ENCODE measurements at regions of chr5 and their contacts with region 1.

Region 1: DNA sequence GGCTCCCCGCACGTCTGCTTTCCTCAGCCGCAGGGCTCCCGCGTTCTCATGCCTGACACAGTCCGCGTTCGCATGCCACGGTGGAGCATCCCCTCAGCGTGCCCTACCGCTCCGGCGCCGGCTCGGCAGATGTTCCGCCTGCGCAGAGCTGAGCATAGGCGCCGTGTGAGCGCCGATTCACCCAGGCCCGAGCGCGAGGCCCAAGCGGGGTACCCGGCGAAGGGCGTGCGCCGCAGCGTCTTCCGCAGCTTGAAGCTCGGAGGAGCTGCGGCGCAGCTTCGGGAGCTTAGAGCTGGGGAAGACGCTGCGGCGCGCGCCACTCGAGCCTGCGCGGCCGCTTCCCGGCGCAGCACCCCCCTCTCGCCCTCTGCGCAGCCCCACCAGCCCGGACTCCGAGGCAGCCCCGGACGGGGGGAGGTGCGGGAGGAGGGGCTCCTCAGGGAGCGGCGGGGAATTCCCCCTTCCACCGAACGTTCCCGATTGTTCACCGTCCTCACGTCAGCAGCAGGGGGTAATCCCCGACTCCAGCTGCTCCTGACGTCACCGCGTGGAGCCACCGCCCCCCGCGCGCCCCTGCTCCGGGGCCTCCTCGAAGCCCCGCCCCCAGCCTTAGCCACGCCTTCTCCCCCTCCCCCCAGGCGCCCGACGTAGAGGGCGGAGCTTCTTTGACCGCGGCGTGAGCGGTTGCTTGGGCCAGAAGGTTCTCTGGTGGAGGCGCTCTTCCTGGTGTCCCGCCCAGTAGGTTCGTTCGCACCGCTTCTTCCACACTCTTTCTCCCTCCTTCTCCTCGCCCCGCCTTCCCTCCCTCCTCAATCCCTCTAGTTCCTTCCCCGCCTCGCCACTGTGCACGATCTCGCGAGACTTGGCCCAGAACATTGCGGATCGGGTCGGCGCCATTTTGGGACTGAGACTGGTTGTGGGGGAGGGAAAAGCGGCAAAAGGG is at the start of gene GPBP1:
- DNase-seq: peak; percentile 99
- ATAC-seq: peak; percentile 78
- H3K4me3 Mint-ChIP-seq: peak within 1 kb of the TSS; percentile 83
- H3K27ac Mint-ChIP-seq: peak within 1 kb of the TSS; percentile 93
- H3K4me1 Mint-ChIP-seq: peaks cover 21% of the 10 kb centered on the region
- H3K27me3 Mint-ChIP-seq: no peaks in the 10 kb centered on the region
- total RNA-seq, gene GPBP1: 91.8 to 116 TPM

Region 2: GRCh38 chr5:55307383-55308253 is 1865.8 kb before region 1 on chr5 and contains the starts of genes DHX29 and MTREX:
- CTCF ChIA-PET with region 1: no interaction called
- POLR2A ChIA-PET with region 1: no interaction called
- intact Hi-C with region 1: loop called in 1 of 2 experiments (anchors 2 kb)
- DNase-seq: peak; percentile 93
- ATAC-seq: peak; percentile 94
- H3K4me3 Mint-ChIP-seq: no peak within 1 kb of the TSS
- H3K27ac Mint-ChIP-seq: no peak within 1 kb of the TSS
- H3K4me1 Mint-ChIP-seq: peaks cover 30% of the 10 kb centered on the region
- H3K27me3 Mint-ChIP-seq: no peaks in the 10 kb centered on the region
- total RNA-seq, gene DHX29: 12.1 to 12.9 TPM
- total RNA-seq, gene MTREX: 98.2 to 106 TPM

Region 3: DNA sequence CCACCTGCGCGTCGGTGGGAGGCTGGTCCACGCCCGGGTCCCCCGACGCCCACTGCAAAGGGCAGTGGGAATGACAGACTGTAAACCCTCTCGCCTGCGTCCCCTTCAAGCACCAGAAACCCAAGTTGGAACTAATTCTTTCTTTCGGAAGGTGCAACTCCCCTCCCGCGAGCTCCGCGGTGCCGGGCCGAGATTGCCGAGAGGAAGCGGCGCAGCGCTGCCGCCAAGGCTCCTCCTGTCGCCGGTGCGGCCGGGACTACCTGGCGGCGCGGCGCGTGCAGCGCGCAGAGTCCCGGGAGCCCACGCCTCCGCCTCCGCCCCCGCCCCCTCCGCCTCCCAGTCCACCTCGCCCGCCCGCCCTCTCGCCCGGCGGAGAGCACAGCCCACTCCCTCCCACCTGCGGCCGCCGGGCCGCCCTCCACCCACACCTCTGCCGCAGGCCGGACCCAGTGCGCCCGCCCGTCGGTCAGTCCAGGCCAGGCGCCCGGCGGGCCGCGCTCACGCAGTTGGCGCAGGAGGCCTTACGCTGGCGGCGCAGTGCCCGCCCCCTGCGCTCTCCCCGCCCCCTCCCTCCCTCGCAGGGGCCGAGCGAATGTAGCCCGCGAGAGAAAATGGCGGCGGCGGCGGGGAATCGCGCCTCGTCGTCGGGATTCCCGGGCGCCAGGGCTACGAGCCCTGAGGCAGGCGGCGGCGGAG is 358.3 kb before region 1 on chr5 and contains the start of gene MAP3K1:
- CTCF ChIA-PET with region 1: no interaction called
- POLR2A ChIA-PET with region 1: no interaction called
- intact Hi-C with region 1: loop called (anchors 1 to 2 kb)
- DNase-seq: peak; percentile 86
- ATAC-seq: peak; percentile 57
- H3K4me3 Mint-ChIP-seq: peak within 1 kb of the TSS; percentile 76
- H3K27ac Mint-ChIP-seq: peak within 1 kb of the TSS; percentile 87
- H3K4me1 Mint-ChIP-seq: peaks cover 33% of the 10 kb centered on the region
- H3K27me3 Mint-ChIP-seq: no peaks in the 10 kb centered on the region
- total RNA-seq, gene MAP3K1: 22.3 to 22.9 TPM

Region 4: GRCh38 chr5:56909294-56910209 is 263.9 kb before region 1 on chr5 and contains the start of gene SETD9:
- CTCF ChIA-PET with region 1: no interaction called
- POLR2A ChIA-PET with region 1: interaction called, 4 read pairs
- intact Hi-C with region 1: loop called (anchors 1 kb)
- DNase-seq: peak; percentile 97
- ATAC-seq: peak; percentile 92
- H3K4me3 Mint-ChIP-seq: peak within 1 kb of the TSS; percentile 90
- H3K27ac Mint-ChIP-seq: peak within 1 kb of the TSS; percentile 94
- H3K4me1 Mint-ChIP-seq: peaks cover 20% of the 10 kb centered on the region
- H3K27me3 Mint-ChIP-seq: peaks cover 5% of the 10 kb centered on the region
- total RNA-seq, gene SETD9: 5.4 to 6.8 TPM

Region 5: DNA sequence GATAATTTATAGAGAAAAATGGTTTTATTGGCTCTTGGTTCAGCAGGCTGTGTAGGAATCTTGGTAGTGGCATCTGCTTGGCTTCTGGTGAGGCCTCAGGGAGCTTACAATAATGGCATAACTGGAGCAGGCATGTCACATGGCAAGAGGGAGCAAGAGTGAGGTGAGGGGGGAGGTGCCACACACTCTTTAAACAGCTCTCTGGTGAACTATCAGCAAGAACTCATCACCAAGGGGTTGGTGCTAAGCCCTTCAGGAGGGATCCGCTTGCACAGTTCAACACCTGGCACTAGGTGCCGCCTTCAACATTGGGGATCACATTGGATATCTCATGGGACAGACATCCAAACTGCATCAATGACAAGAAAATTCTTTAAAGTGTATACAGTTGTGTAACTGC is 10.9 kb after region 1 on chr5:
- CTCF ChIA-PET with region 1: interaction called, 6 read pairs
- POLR2A ChIA-PET with region 1: interaction called, 10 read pairs
- intact Hi-C with region 1: loop called in 1 of 2 experiments (anchors 2 kb)
- DNase-seq: peak; percentile 20
- ATAC-seq: peak; percentile 72
- H3K4me3 Mint-ChIP-seq: no peak overlapping the region
- H3K27ac Mint-ChIP-seq: peak overlapping the region; percentile 53
- H3K4me1 Mint-ChIP-seq: peaks cover 87% of the 10 kb centered on the region
- H3K27me3 Mint-ChIP-seq: no peaks in the 10 kb centered on the region

Region 6: GRCh38 chr5:57221049-57221568 is 47.7 kb after region 1 on chr5:
- CTCF ChIA-PET with region 1: interaction called, 9 read pairs
- POLR2A ChIA-PET with region 1: interaction called, 7 read pairs
- intact Hi-C with region 1: loop called (anchors 1 kb)
- DNase-seq: no peak
- ATAC-seq: peak; percentile 54
- H3K4me3 Mint-ChIP-seq: no peak overlapping the region
- H3K27ac Mint-ChIP-seq: peak overlapping the region; percentile 73
- H3K4me1 Mint-ChIP-seq: peaks cover 46% of the 10 kb centered on the region
- H3K27me3 Mint-ChIP-seq: no peaks in the 10 kb centered on the region

Region 7: GRCh38 chr5:57370371-57370770 is 196.9 kb after region 1 on chr5:
- CTCF ChIA-PET with region 1: no interaction called
- POLR2A ChIA-PET with region 1: no interaction called
- intact Hi-C with region 1: no loop called
- DNase-seq: no peak
- ATAC-seq: no peak
- H3K4me3 Mint-ChIP-seq: no peak overlapping the region
- H3K27ac Mint-ChIP-seq: no peak overlapping the region
- H3K4me1 Mint-ChIP-seq: no peaks in the 10 kb centered on the region
- H3K27me3 Mint-ChIP-seq: peaks cover 6% of the 10 kb centered on the region

Region 8: DNA sequence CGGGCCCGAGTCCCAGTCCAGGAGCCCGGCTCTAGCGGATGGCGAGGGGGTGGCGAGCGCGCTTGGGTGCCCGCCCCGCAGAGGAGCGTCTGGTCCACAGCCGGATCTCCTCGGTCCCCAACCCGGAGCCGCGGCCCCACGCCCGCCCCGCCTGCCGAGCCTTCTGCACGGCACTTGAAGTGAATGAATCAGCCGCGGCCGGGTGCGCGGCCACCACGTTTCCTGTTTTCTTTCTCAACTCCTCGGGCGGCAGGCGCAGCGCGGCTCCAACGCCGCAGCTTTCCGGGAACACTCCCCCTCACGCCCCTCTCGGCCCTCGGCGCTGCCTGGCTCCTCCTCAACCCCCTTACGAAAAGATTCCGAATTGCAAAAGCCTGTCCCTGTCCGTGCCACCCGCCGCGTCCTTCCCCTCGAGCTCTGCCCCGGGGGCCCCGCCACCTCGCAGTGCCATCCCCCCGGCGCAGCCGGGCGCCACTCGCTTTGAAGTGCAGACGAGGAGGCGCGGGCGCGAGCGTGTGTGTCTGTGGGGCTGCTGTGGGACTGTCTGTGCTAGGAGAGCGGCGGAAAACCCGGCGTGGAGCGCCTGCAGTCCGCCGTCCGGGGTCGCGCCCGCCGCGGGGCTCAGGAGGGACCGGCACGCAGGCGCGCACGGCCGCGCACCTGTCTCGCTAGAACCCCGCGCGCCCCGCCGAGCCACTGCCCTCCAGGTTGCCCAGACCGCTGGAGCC is 1866.0 kb after region 1 on chr5:
- CTCF ChIA-PET with region 1: no interaction called
- POLR2A ChIA-PET with region 1: no interaction called
- intact Hi-C with region 1: loop called in 1 of 2 experiments (anchors 5 kb)
- DNase-seq: peak; percentile 95
- ATAC-seq: peak; percentile 75
- H3K4me3 Mint-ChIP-seq: peak overlapping the region; percentile 86
- H3K27ac Mint-ChIP-seq: peak overlapping the region; percentile 88
- H3K4me1 Mint-ChIP-seq: peaks cover 39% of the 10 kb centered on the region
- H3K27me3 Mint-ChIP-seq: no peaks in the 10 kb centered on the region

Measured in activated CD4-positive, alpha-beta T cell treated with anti-CD3 and anti-CD28 coated beads for 36 hours (primary cell).